Activated naive CD4-positive, alpha-beta T cell treated with anti-CD3 and anti-CD28 coated beads for 36 hours (primary cell): ENCODE measurements at regions of chr11 and their contacts with region 1.

Region 1: GRCh38 chr11:1832211-1832919 is 2.4 kb upstream of the SYT8 start:
- DNase-seq: peak; percentile 64
- H3K4me3 Mint-ChIP-seq: no peak overlapping the region
- H3K27ac Mint-ChIP-seq: no peak overlapping the region
- H3K4me1 Mint-ChIP-seq: no peaks in the 10 kb centered on the region
- H3K27me3 Mint-ChIP-seq: peaks cover 2% of the 10 kb centered on the region

Region 2: DNA sequence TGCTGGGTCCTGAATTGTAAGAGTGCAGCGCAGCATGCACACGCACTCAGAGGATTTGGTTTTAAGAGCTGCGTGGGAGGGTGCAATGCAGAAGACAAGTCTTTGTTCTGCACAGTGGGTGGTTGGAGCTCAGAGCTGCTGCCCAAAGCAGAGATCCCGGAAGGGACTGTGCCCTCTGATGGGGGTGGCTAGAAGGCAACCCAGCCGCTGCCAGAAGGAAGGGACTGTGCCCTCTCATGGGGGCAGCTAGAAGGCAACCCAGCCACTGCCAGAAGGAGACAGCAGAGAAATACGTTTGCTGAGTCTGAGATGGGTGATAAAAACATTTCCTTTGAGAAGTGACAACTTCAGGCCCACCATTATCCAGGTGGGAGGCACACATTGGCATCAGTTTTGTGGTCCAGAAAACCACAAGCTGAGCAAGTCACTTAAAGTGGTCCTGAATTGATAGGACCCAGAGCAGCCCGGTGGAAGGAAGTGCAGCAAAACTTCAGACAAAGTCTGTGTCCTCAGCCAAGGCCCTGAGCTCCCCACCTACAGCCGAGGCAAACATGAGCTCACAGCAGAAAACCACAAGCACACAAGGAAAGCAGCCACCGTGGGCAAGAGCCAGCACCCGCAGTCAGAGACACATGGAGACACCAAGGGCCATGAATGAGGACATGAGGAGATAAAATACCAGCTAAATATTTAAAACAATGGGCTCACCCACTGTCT is 131.1 kb before region 1 on chr11:
- CTCF ChIA-PET with region 1: interaction called, 22 read pairs
- intact Hi-C with region 1: no loop called
- DNase-seq: no peak
- H3K4me3 Mint-ChIP-seq: no peak overlapping the region
- H3K27ac Mint-ChIP-seq: no peak overlapping the region
- H3K4me1 Mint-ChIP-seq: peaks cover 12% of the 10 kb centered on the region
- H3K27me3 Mint-ChIP-seq: no peaks in the 10 kb centered on the region

Region 3: GRCh38 chr11:1706634-1707400 is 125.5 kb before region 1 on chr11:
- CTCF ChIA-PET with region 1: interaction called, 22 read pairs
- intact Hi-C with region 1: no loop called
- DNase-seq: peak; percentile 35
- H3K4me3 Mint-ChIP-seq: no peak overlapping the region
- H3K27ac Mint-ChIP-seq: no peak overlapping the region
- H3K4me1 Mint-ChIP-seq: no peaks in the 10 kb centered on the region
- H3K27me3 Mint-ChIP-seq: no peaks in the 10 kb centered on the region

Region 4: GRCh38 chr11:1757861-1758610 is 74.3 kb before region 1 on chr11:
- CTCF ChIA-PET with region 1: interaction called, 8 read pairs
- intact Hi-C with region 1: loop called (anchors 5 kb)
- DNase-seq: peak; percentile 78
- H3K4me3 Mint-ChIP-seq: no peak overlapping the region
- H3K27ac Mint-ChIP-seq: peak overlapping the region; percentile 74
- H3K4me1 Mint-ChIP-seq: peaks cover 69% of the 10 kb centered on the region
- H3K27me3 Mint-ChIP-seq: no peaks in the 10 kb centered on the region

Region 5: DNA sequence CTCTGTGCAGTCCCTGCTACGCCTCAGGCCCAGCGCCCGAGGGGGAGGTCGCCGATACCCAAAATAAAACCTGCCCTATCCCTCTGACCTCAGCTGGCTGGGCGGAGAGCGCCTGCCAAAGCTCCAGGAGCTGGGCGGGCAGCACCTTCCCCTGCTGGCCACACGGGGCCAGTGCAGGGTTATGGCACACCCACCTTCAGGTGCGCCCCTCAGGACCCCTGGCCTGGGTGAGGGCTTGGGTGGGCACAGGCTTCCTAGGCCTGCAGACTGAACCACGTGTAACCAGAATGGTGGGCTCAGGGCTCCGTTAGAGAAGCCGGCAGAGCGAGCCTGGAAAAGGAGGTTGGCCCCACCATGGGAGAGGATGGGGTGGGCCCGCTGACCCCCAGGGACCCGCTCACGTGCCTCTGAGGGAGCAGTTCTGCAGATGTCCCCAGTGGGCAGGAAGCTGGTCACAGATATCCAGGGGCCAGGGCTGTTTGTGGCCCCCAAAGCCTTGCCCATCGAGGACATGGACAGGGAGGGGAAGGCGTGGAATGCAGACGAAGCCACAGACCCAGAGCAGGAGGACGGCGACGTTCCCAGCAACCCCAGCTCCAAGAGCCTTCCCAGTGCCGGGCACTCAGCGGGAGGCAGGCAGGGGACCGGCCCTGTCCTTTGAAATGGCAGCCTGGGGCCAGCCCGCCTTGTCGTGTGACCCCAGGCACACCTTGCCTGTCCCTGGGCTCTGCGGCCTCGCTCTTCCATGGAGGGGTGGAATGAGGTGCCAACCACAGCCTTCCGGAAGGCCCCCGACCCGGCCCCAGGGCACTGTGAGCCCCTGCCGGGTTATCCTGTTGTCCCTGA is 85.5 kb after region 1 on chr11:
- CTCF ChIA-PET with region 1: interaction called, 13 read pairs
- intact Hi-C with region 1: loop called (anchors 1 kb)
- DNase-seq: no peak
- H3K4me3 Mint-ChIP-seq: no peak overlapping the region
- H3K27ac Mint-ChIP-seq: no peak overlapping the region
- H3K4me1 Mint-ChIP-seq: peaks cover 11% of the 10 kb centered on the region
- H3K27me3 Mint-ChIP-seq: peaks cover 3% of the 10 kb centered on the region

Region 6: GRCh38 chr11:3000082-3000961 is 1168.0 kb after region 1 on chr11:
- CTCF ChIA-PET with region 1: no interaction called
- intact Hi-C with region 1: no loop called
- DNase-seq: no peak
- H3K4me3 Mint-ChIP-seq: no peak overlapping the region
- H3K27ac Mint-ChIP-seq: no peak overlapping the region
- H3K4me1 Mint-ChIP-seq: no peaks in the 10 kb centered on the region
- H3K27me3 Mint-ChIP-seq: no peaks in the 10 kb centered on the region